Calu3 (cell line): ENCODE measurements at regions of chr15 and their contacts with region 1.

Region 1: GRCh38 chr15:64430000-64430735 is 30.2 kb upstream of the ZNF609 start:
- DNase-seq: no peak
- H3K4me3 Mint-ChIP-seq: no peak overlapping the region
- H3K27ac Mint-ChIP-seq: no peak overlapping the region
- H3K4me1 Mint-ChIP-seq: no peaks in the 10 kb centered on the region
- H3K27me3 Mint-ChIP-seq: no peaks in the 10 kb centered on the region
- CTCF ChIP-seq: no peak

Region 2: DNA sequence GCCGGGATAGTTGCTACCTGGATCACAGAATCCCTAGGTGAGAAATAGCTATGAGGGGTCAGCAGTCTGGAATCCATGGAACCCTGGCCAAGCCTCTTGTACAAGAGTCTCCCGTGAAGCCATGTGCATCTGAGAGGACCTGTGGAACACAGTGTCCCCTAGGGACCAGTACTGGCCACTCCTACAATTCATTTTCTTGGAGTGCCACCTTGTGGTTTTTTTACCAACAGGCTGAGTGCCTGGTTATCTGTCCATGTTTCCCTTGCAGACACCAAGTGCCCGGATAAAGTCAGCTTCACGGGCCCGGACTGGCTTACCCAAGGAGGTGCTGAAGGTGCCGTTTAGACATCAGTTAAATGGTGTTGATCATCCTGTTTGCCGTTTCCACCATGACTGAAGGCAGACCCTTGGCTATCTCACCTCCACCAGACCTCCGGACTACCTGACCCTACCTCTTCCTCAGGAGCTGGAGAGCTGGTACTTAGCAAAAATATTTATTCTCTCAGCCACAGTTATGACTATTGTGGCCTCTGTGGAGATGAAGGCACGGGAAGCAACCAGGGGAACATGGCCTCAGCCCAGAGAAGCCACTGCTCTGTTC is 251.4 kb after region 1 on chr15:
- CTCF ChIA-PET with region 1: interaction called, 8 read pairs
- intact Hi-C with region 1: loop called (anchors 2 kb)
- DNase-seq: peak; percentile 71
- H3K4me3 Mint-ChIP-seq: no peak overlapping the region
- H3K27ac Mint-ChIP-seq: no peak overlapping the region
- H3K4me1 Mint-ChIP-seq: no peaks in the 10 kb centered on the region
- H3K27me3 Mint-ChIP-seq: no peaks in the 10 kb centered on the region
- CTCF ChIP-seq: peak; percentile 80